H1 (cell line): ENCODE measurements at regions of chr22 and their contacts with region 1.

Region 1: DNA sequence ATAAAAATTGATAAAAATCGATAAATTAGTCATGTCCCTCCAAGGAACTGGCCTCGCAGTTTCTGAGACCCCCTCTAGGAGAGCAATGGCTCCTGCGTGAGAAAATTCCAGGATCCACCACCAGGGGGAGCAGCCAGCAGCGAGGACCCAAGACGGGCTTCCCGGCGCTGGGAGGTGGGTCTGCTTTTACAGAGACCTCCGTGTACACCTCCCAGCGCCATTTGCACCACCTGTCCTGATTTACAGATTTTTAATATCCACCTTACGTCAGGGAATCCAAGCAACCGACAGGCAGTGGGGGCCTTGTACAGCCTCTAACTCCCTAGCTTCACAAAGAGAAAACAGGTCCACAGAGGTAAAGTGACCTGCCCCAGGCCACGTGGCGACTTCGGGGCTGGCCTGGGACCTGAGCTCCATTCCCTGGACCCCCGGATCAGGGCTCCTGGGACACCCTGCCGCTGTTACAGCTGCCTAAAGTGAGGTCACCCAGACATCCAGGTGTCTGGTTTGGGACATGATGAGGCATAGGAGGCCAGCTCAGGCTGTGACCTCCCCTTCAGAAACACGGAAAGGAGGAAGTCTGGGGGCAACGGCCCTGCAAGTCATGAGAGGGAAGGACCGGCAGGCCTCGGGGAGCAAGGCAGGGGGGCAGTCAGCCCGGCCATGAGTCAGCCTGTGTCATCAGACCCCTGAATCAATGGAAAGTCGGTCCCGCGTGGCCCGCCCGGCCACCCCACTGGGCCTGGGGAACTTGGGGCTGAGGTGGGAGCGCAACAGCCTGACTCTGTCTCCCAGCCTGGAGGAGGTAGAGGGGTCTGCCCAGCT is 3.5 kb downstream of the OSM start:
- DNase-seq: peak; percentile 66 to 98
- H3K4me3 ChIP-seq: no peak overlapping the region
- H3K27ac ChIP-seq: no peak overlapping the region
- H3K4me1 ChIP-seq: peaks cover 0 to 4% (median 2%) of the 10 kb centered on the region in 4 experiments; a peak in 6 of 7 replicates
- H3K27me3 ChIP-seq: no peaks in the 10 kb centered on the region; a peak in 2 of 7 replicates
- CTCF ChIP-seq: peak; percentile 85 to 99 (median 90)
- EP300 ChIP-seq: no peak
- POLR2A ChIP-seq: no peak
- RAD21 ChIP-seq: peak; percentile 59 to 72

Region 2: DNA sequence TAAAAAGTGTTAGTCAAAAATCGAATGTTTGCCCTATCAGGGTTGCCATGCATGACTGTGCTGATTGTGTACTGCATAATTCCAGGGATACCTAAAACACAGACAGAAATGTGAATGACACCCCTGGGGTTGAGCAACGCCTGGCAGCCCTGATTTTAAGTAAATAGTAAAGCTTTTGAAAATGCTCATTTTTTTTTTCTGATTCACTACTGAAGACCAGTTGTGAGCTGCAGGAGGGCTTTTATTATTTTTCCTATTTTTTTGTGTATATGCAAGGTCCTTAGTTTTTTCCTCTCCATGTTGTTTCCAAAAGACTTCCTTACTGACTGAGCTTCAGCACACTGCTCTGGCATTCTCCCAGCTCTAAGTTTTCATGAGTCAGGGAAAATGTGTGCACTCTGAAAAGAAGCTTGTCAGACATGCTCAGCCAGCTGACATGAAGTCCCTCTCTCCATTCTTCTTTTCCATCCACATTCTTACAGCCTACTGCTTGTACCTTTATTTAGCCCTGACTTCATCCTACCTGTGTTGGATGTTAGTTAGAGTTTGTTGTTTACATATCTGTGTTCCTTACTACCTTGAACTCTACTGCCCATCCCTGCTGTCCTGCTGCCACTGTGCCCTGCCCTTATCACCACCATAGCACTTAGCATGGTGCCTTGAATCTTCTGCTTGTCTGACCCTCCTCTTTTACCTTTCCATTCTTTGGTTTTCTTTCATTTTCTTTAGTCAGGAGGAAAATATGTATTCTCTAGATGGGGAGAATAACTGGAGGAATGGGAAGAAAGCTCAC is 103.4 kb before region 1 on chr22:
- CTCF ChIA-PET with region 1: no interaction called
- POLR2A ChIA-PET with region 1: no interaction called
- DNase-seq: no peak
- H3K4me3 ChIP-seq: no peak overlapping the region
- H3K27ac ChIP-seq: no peak overlapping the region
- H3K4me1 ChIP-seq: peaks cover 0 to 3% (median under 1%) of the 10 kb centered on the region in 4 experiments; a peak in 4 of 7 replicates
- H3K27me3 ChIP-seq: no peaks in the 10 kb centered on the region
- CTCF ChIP-seq: no peak
- EP300 ChIP-seq: no peak
- POLR2A ChIP-seq: no peak
- RAD21 ChIP-seq: no peak

Region 3: GRCh38 chr22:30277547-30278344 is 14.6 kb after region 1 on chr22:
- CTCF ChIA-PET with region 1: interaction called, 14 read pairs
- POLR2A ChIA-PET with region 1: interaction called, 4 read pairs
- DNase-seq: no peak
- H3K4me3 ChIP-seq: no peak overlapping the region
- H3K27ac ChIP-seq: no peak overlapping the region
- H3K4me1 ChIP-seq: peaks cover 0 to 10% (median 3%) of the 10 kb centered on the region in 4 experiments; a peak in 3 of 7 replicates
- H3K27me3 ChIP-seq: no peaks in the 10 kb centered on the region; a peak in 1 of 7 replicates
- CTCF ChIP-seq: no peak
- EP300 ChIP-seq: no peak
- POLR2A ChIP-seq: no peak
- RAD21 ChIP-seq: no peak

Region 4: DNA sequence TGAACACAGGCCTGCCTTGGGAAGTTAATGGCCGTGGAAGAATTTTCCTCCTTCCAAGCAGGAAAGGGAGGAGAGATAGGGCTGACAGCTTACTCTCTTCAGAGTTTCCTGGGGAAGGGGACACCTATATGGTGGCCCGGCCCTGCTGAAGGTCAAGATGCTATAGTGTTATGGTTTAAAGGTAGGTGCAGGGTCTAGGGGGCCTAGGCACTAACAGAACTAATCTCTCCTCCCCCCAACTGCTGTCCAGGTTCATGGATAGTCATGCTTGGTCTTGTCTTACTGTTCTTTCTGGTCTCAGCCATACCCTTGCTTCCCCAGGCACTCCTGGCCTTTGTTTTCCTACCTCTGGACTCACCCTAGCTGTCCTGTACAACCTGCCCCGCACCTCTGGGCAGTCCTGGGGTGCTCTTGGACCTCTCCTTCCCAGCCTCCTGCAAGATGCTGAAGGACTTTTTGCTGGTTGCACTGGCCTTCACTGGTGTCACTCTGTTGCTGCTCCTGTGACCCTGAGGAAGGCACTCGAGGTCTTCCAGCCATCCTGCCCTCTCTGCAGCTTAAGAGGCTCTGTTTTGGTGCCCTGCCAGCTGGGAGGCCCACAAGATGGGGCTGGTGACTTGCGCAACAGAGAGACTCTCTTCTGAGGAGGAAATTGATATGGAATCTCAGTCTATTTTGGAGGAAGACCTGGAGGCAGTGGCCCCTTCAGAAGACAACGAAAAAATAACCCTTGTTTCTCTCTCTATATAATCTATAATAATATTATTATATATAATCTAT is 190.8 kb after region 1 on chr22:
- CTCF ChIA-PET with region 1: no interaction called
- POLR2A ChIA-PET with region 1: no interaction called
- DNase-seq: no peak
- H3K4me3 ChIP-seq: no peak overlapping the region
- H3K27ac ChIP-seq: no peak overlapping the region
- H3K4me1 ChIP-seq: no peaks in the 10 kb centered on the region
- H3K27me3 ChIP-seq: no peaks in the 10 kb centered on the region
- CTCF ChIP-seq: peak; percentile 26 to 48 (median 37)
- EP300 ChIP-seq: no peak
- POLR2A ChIP-seq: no peak
- RAD21 ChIP-seq: peak; percentile 57 to 71